ENCODE measurements at regions of chr2 and their contacts with region 1.

Region 1: GRCh38 chr2:109510136-109511028 is 103.4 kb downstream of the SEPTIN10 start:
- DNase-seq: peak; percentile 57 to 64 (median 61)
- H3K4me3 ChIP-seq: no peak overlapping the region
- H3K4me3 Mint-ChIP-seq: no peak overlapping the region
- H3K27ac ChIP-seq: no peak overlapping the region
- H3K27ac Mint-ChIP-seq: peak overlapping the region in 1 of 7 donors; percentile 51
- H3K4me1 ChIP-seq: no peaks in the 10 kb centered on the region
- H3K4me1 Mint-ChIP-seq: peaks cover 2% of the 10 kb centered on the region
- H3K27me3 ChIP-seq: no peaks in the 10 kb centered on the region
- H3K27me3 Mint-ChIP-seq: peaks cover 2 to 6% (median 3%) of the 10 kb centered on the region in 3 donors
- CTCF ChIP-seq: peak; percentile 93

Region 2: GRCh38 chr2:108855194-108855593 is 655.2 kb before region 1 on chr2:
- intact Hi-C with region 1: loop called in 1 of 2 experiments (anchors 5 kb)
- DNase-seq: no peak
- H3K4me3 ChIP-seq: no peak overlapping the region
- H3K4me3 Mint-ChIP-seq: no peak overlapping the region
- H3K27ac ChIP-seq: no peak overlapping the region
- H3K27ac Mint-ChIP-seq: no peak overlapping the region
- H3K4me1 ChIP-seq: no peaks in the 10 kb centered on the region
- H3K4me1 Mint-ChIP-seq: no peaks in the 10 kb centered on the region
- H3K27me3 ChIP-seq: no peaks in the 10 kb centered on the region
- H3K27me3 Mint-ChIP-seq: no peaks in the 10 kb centered on the region
- CTCF ChIP-seq: no peak

Region 3: GRCh38 chr2:108927936-108928659 is 582.3 kb before region 1 on chr2:
- intact Hi-C with region 1: loop called in 1 of 2 experiments (anchors 10 kb)
- DNase-seq: no peak
- H3K4me3 ChIP-seq: no peak overlapping the region
- H3K4me3 Mint-ChIP-seq: no peak overlapping the region
- H3K27ac ChIP-seq: no peak overlapping the region
- H3K27ac Mint-ChIP-seq: no peak overlapping the region
- H3K4me1 ChIP-seq: no peaks in the 10 kb centered on the region
- H3K4me1 Mint-ChIP-seq: no peaks in the 10 kb centered on the region
- H3K27me3 ChIP-seq: no peaks in the 10 kb centered on the region
- H3K27me3 Mint-ChIP-seq: peaks cover 0 to 3% (median 1%) of the 10 kb centered on the region in 3 donors
- CTCF ChIP-seq: peak; percentile 63

Region 4: DNA sequence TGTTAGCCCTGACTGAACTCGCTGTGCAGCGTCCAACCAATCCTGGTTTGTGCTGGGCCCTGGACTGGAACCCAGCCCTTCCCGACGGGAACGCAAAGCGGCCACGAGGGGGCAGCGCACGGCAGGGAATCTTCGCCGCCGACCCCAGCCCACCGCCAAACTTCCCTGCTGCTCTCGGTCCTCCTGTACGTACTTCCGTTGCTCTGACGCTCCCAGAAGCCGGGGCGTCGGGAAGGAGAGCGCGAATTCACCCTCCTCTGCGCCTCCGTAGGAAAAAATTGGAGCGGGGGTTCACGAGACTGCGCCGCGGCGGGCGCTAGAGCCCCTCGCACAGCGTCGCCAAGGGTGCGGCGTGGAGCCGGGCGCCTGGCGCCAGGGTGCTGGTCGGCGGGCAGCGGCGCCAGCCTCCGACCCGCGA is 382.3 kb before region 1 on chr2:
- intact Hi-C with region 1: loop called (anchors 1 to 2 kb)
- DNase-seq: peak; percentile 51 to 67 (median 65)
- H3K4me3 ChIP-seq: peak overlapping the region; percentile 33 to 87 (median 62)
- H3K4me3 Mint-ChIP-seq: peak overlapping the region; percentile 77 to 87
- H3K27ac ChIP-seq: no peak overlapping the region
- H3K27ac Mint-ChIP-seq: peak overlapping the region in 3 of 7 donors; percentile 30 to 42 (median 40)
- H3K4me1 ChIP-seq: peaks cover 10 to 28% of the 10 kb centered on the region in 2 donors
- H3K4me1 Mint-ChIP-seq: peaks cover 23% of the 10 kb centered on the region
- H3K27me3 ChIP-seq: peaks cover 30 to 42% of the 10 kb centered on the region in 2 donors
- H3K27me3 Mint-ChIP-seq: peaks cover 37 to 57% (median 37%) of the 10 kb centered on the region in 3 donors
- CTCF ChIP-seq: peak; percentile 94